ENCODE measurements at regions of chr1 and their contacts with region 1.

Region 1: GRCh38 chr1:216815260-216816131 is 92.3 kb upstream of the ESRRG start:
- DNase-seq: peak in 4 of 5 donors; percentile 39 to 50 (median 42)
- ATAC-seq: peak; percentile 85 to 92 (median 88)
- H3K4me3 ChIP-seq: peak overlapping the region in 1 of 12 donors; percentile 16
- H3K27ac ChIP-seq: peak overlapping the region; percentile 62 to 91 (median 80)
- H3K4me1 ChIP-seq: peaks cover 0 to 43% (median 4%) of the 10 kb centered on the region in 12 donors
- H3K27me3 ChIP-seq: no peaks in the 10 kb centered on the region
- CTCF ChIP-seq: no peak
- POLR2A ChIP-seq: no peak

Region 2: DNA sequence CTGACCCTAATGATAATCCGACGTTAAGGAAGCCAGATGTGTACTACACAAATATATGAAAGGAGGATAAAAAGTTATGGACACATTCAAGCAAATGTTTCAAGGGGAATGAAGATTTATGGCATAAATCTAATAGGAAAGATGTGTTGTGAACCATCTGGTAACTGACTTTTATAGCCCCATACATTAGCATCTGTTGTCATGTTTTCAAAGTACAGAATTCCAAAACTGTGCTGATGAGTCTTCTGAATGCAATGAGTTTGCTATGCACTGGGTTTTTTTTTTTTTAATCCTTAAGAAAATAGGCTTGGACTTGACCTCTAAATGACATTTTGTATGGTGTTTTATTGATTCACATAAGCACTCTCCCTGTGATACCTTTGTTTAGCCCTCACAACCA is 66.2 kb after region 1 on chr1:
- intact Hi-C with region 1: no loop called
- DNase-seq: no peak
- ATAC-seq: no peak
- H3K4me3 ChIP-seq: no peak overlapping the region
- H3K27ac ChIP-seq: no peak overlapping the region
- H3K4me1 ChIP-seq: no peaks in the 10 kb centered on the region
- H3K27me3 ChIP-seq: no peaks in the 10 kb centered on the region
- CTCF ChIP-seq: no peak
- POLR2A ChIP-seq: no peak

Region 3: DNA sequence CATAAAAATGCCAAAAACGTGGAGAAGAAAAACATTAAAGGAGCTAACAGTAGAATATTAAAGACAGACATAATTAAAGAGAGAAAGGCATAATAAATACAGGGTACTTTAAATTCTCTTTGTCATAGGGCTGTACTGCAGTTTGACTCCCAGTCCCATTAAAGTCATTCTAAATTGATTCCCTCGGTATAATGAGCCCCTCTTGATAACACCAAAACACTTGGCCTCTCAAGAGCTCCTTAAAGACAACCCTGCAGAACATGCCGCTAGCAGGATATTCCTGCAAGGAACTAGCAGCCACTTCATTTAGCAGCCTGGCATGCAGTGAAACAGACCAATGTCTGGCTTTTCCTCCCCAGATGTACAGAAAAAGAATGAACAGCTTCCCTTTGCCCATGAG is 181.6 kb after region 1 on chr1:
- intact Hi-C with region 1: no loop called
- DNase-seq: no peak
- ATAC-seq: no peak
- H3K4me3 ChIP-seq: no peak overlapping the region
- H3K27ac ChIP-seq: no peak overlapping the region
- H3K4me1 ChIP-seq: no peaks in the 10 kb centered on the region
- H3K27me3 ChIP-seq: no peaks in the 10 kb centered on the region
- CTCF ChIP-seq: no peak
- POLR2A ChIP-seq: no peak

Region 4: DNA sequence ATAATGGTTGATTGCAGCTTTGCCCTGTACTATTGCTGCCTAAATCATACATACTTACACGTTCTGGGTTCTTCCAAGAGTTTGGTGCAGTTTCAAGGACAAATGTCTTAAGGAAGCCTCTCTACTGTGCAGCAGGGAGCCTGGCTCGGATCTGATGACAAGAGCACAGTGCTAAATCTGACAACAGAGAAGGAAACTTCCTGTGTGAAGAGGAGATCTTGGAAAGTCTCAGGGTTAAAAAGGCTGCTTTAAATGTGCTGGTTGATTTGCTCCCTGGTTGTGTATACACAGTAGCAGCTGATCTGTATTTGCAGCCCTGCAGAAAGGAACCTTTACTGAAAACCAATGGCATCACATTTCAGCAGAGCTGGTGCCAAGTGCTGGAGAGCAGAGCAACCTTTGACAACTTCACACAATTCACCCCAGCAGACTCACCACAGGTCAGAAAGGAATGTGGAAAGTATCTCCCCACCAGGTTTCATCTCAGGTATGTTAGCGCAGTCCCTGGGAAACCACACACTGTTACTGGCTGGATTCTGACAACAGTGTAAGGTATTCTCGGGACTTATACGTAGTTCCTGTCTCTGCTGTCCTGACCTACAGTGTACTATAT is 262.7 kb after region 1 on chr1:
- intact Hi-C with region 1: loop called in 1 of 10 experiments (anchors 10 kb)
- DNase-seq: peak in 1 of 5 donors; percentile 30
- ATAC-seq: peak; percentile 69 to 74 (median 73)
- H3K4me3 ChIP-seq: peak overlapping the region in 11 of 12 donors; percentile 1 to 54 (median 38)
- H3K27ac ChIP-seq: peak overlapping the region; percentile 9 to 80 (median 64)
- H3K4me1 ChIP-seq: peaks cover 0 to 10% (median 0%) of the 10 kb centered on the region in 12 donors
- H3K27me3 ChIP-seq: no peaks in the 10 kb centered on the region
- CTCF ChIP-seq: no peak
- POLR2A ChIP-seq: no peak

Measured in heart left ventricle (tissue), 16 donors.